Activated CD4-positive, alpha-beta T cell treated with anti-CD3 and anti-CD28 coated beads for 36 hours (primary cell): ENCODE measurements at regions of chr12 and their contacts with region 1.

Region 1: GRCh38 chr12:92928962-92929915 is at the start of gene EEA1:
- DNase-seq: peak; percentile 99
- ATAC-seq: peak; percentile 80
- H3K4me3 Mint-ChIP-seq: peak within 1 kb of the TSS; percentile 86
- H3K27ac Mint-ChIP-seq: peak within 1 kb of the TSS; percentile 96
- H3K4me1 Mint-ChIP-seq: peaks cover 34% of the 10 kb centered on the region
- H3K27me3 Mint-ChIP-seq: no peaks in the 10 kb centered on the region
- total RNA-seq, gene EEA1: 20.2 to 33.2 TPM

Region 2: GRCh38 chr12:92505254-92506231 is 423.7 kb before region 1 on chr12:
- CTCF ChIA-PET with region 1: no interaction called
- POLR2A ChIA-PET with region 1: no interaction called
- intact Hi-C with region 1: loop called in 1 of 2 experiments (anchors 10 kb)
- DNase-seq: peak; percentile 77
- ATAC-seq: peak; percentile 56
- H3K4me3 Mint-ChIP-seq: peak overlapping the region; percentile 72
- H3K27ac Mint-ChIP-seq: peak overlapping the region; percentile 99
- H3K4me1 Mint-ChIP-seq: peaks cover 50% of the 10 kb centered on the region
- H3K27me3 Mint-ChIP-seq: no peaks in the 10 kb centered on the region

Region 3: DNA sequence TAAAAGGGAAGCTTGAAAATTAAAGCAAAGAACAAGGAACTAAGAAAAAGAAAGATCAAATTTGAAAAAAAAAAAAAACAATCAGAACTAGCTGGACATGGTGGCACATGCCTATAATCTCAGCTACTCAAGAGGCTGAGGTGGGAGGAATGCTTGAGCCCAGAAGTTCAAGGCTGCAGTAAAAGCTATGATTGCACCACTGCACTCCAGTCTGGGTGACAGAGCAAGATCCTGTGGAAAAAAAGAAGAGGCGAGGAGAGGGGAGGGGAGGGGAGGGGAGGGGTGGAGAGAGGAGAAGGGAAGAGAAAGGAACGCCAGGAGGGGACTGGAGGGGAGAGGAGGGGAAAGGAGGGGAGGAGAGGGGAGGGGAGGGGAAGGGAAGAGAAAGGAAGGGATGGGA is 43.1 kb before region 1 on chr12:
- CTCF ChIA-PET with region 1: no interaction called
- POLR2A ChIA-PET with region 1: no interaction called
- intact Hi-C with region 1: no loop called
- DNase-seq: no peak
- ATAC-seq: no peak
- H3K4me3 Mint-ChIP-seq: no peak overlapping the region
- H3K27ac Mint-ChIP-seq: no peak overlapping the region
- H3K4me1 Mint-ChIP-seq: peaks cover 22% of the 10 kb centered on the region
- H3K27me3 Mint-ChIP-seq: no peaks in the 10 kb centered on the region

Region 4: GRCh38 chr12:92912052-92912451 is 17.2 kb before region 1 on chr12:
- CTCF ChIA-PET with region 1: interaction called, 15 read pairs
- POLR2A ChIA-PET with region 1: interaction called, 4 read pairs
- intact Hi-C with region 1: loop called in 1 of 2 experiments (anchors 1 kb)
- DNase-seq: peak; percentile 38
- ATAC-seq: peak; percentile 90
- H3K4me3 Mint-ChIP-seq: no peak overlapping the region
- H3K27ac Mint-ChIP-seq: peak overlapping the region; percentile 78
- H3K4me1 Mint-ChIP-seq: peaks cover 62% of the 10 kb centered on the region
- H3K27me3 Mint-ChIP-seq: no peaks in the 10 kb centered on the region

Region 5: DNA sequence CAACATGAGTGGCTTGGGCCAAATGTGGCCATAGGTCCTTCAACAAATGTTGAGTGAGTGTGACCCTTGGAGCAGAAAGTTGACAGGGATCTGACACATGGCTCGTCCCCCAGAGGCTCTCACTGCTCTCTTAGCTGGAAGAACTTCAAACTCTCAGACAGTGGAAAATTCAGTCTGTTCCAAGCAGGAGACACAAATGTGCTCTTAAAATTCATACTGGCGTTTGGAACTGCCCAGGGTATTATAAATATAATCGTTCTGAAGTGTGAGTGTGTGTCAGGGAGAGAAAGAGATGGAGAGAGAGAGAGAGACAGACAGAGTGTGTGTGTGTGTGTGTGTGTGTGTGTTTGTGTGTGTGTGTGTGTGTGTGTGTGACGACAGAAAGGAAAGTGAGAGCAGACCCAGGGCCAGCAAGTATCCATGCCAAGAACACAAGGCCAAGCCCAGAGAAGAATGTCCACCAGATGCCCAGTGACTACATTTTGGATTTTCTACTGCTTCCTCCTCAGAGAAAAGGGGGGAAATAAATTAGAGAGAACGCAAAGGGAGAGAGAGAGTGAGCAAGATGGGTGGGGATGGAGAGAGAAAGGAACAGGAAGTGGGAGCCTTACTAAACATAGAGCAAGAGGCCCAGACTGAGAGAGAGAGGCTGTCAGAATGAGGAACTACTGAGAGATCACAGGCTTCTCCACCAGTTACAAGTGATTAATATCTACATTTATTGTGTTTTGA is 254.9 kb after region 1 on chr12:
- CTCF ChIA-PET with region 1: no interaction called
- POLR2A ChIA-PET with region 1: no interaction called
- intact Hi-C with region 1: no loop called
- DNase-seq: no peak
- ATAC-seq: peak; percentile 79
- H3K4me3 Mint-ChIP-seq: no peak overlapping the region
- H3K27ac Mint-ChIP-seq: peak overlapping the region; percentile 88
- H3K4me1 Mint-ChIP-seq: peaks cover 23% of the 10 kb centered on the region
- H3K27me3 Mint-ChIP-seq: no peaks in the 10 kb centered on the region

Region 6: GRCh38 chr12:93419388-93420034 is 490.3 kb after region 1 on chr12:
- CTCF ChIA-PET with region 1: interaction called, 8 read pairs
- POLR2A ChIA-PET with region 1: interaction called, 4 read pairs
- intact Hi-C with region 1: loop called in 1 of 2 experiments (anchors 2 kb)
- DNase-seq: no peak
- ATAC-seq: peak; percentile 31
- H3K4me3 Mint-ChIP-seq: no peak overlapping the region
- H3K27ac Mint-ChIP-seq: peak overlapping the region; percentile 44
- H3K4me1 Mint-ChIP-seq: peaks cover 90% of the 10 kb centered on the region
- H3K27me3 Mint-ChIP-seq: no peaks in the 10 kb centered on the region

Region 7: DNA sequence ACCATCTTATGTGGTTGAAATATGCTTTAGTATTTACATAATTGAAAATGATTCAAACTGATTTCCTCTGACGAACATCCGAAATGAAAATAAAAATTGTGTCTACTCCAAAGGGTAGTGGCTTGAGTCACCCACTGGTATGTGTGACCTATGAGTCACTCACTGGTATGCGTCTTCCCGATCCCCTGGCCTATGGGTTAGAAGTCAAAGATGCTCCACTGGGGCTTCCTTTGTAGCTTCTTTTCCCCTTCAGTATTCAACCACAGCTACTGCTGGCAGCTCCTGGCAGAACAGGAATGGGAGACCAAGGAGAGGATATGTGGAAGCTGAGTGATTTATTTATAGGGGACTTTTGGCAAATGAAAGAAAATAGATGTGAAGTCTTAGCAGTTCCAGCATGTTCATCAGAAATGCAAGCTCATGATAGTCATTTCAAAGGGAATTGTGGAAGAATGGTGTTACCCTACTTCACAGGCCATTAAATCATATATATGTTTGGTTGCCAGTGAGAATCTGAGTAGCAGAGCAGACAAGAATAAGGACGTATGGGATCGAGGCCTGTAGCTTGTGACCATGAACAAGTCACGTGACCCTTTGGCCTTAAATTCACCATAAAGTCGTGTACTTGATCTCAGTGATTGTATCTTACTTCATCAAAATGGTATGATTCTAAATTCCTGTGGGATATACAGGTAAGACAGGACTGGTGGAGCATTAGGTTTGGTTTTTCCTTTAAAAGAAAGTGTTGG is 856.2 kb after region 1 on chr12:
- CTCF ChIA-PET with region 1: no interaction called
- POLR2A ChIA-PET with region 1: no interaction called
- intact Hi-C with region 1: loop called in 1 of 2 experiments (anchors 5 kb)
- DNase-seq: peak; percentile 72
- ATAC-seq: peak; percentile 76
- H3K4me3 Mint-ChIP-seq: peak overlapping the region; percentile 20
- H3K27ac Mint-ChIP-seq: peak overlapping the region; percentile 87
- H3K4me1 Mint-ChIP-seq: peaks cover 70% of the 10 kb centered on the region
- H3K27me3 Mint-ChIP-seq: no peaks in the 10 kb centered on the region